ENCODE measurements at regions of chr2 and their contacts with region 1.

Region 1: DNA sequence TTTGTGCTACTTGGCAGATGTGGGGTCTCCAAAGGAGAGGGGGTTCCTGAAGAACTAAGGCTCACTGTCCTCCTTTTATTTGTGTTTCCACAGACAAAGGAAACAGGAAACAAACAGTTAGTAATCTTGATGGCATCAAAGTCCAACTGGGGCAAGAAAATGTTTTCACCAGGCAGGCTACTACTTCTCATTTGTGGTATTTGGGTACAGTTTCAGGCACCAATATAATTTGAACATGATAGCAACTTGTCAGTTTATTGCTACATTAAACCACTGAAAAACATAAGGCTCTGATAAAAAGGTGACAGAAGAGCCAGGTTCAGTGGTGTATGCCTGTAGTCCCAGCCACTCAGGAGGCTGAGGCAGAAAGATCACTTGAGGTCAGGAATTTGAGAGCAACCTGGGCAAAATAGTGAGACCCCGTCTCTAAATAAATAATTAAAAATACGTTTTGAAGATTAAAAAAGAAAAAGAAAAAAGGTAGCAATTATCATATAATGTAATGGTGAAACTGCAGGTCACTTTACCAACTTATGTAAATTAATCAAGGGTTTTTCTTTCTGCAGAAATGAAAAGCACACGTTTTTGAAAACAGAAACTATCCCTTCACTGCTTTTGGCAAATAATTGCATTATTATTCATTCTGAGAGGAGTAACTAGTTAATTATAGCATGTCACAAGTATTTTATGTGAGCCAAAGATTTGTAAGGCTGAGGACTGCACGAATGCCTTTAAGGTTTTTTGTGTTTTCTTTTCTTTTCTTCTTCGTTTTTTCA is 157.5 kb upstream of the CAVIN2 start:
- DNase-seq: no peak
- H3K4me3 ChIP-seq: no peak overlapping the region
- H3K27ac ChIP-seq: no peak overlapping the region
- H3K4me1 ChIP-seq: no peaks in the 10 kb centered on the region
- H3K27me3 ChIP-seq: no peaks in the 10 kb centered on the region
- CTCF ChIP-seq: no peak

Region 2: DNA sequence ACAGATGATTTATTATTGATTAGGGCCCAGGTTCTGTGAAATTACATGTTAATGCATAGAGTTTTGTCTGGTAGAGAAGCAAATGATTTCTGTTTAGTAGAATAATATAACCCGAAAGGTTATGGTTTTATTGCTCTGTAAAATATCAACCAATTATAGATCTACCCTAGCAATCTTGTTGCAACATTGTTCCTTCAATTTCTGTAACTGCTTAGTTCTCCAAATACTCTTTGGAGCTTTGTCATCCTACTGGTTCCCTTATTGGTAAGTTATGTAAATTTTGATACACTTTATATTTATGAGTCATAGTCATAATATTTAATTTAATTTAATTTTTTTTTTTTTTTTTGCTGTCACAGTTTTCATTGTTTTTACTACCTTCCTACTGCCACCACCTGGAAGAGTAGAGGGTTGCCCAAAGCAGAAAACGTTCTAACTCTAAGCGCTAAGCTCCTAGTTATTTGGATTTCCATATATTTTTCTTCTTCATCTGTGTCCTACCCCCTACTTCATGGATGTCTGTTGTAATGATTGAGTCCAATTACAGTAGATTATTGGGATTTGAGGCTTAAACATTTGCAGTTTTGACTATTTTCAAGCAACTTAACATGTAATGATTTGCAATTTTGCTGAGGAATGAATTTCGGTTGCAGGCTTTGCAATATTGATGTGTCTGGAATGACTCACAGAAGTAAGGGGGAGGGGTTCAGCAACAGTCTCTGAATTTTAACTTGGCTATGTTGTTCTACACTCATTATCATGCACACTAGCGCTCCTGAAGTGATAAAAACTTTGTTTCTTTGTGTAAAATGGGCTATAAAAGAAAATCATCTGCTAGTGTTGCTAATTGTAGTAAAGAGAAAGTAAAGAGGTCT is 275.4 kb before region 1 on chr2:
- CTCF ChIA-PET with region 1: no interaction called
- POLR2A ChIA-PET with region 1: no interaction called
- intact Hi-C with region 1: no loop called
- DNase-seq: peak; percentile 48
- H3K4me3 ChIP-seq: no peak overlapping the region
- H3K27ac ChIP-seq: no peak overlapping the region
- H3K4me1 ChIP-seq: peaks cover 22% of the 10 kb centered on the region
- H3K27me3 ChIP-seq: no peaks in the 10 kb centered on the region
- CTCF ChIP-seq: peak; percentile 43; the same call in 1 of the 2 replicates

Region 3: DNA sequence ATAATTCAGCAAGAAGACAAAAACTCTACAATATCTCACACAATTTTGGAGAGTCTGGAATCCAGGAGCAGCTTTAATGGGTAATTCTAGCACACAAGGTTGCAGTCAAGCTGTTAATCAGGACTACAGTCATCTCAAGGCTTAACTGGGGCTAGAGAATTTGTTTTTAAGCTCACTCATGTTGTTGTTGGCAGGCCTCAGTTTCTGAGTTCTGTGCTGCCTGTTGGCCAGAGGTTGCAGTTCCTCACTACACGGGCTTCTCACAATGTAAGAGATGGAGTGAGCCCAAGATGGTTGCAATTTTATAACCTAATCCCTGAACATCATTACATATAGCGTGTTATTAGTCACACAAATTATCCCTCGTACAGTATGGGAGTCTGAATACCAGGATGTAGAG is 241.0 kb after region 1 on chr2:
- CTCF ChIA-PET with region 1: no interaction called
- POLR2A ChIA-PET with region 1: interaction called, 10 read pairs
- intact Hi-C with region 1: no loop called
- DNase-seq: no peak
- H3K4me3 ChIP-seq: no peak overlapping the region
- H3K27ac ChIP-seq: no peak overlapping the region
- H3K4me1 ChIP-seq: no peaks in the 10 kb centered on the region
- H3K27me3 ChIP-seq: no peaks in the 10 kb centered on the region
- CTCF ChIP-seq: no peak

Region 4: DNA sequence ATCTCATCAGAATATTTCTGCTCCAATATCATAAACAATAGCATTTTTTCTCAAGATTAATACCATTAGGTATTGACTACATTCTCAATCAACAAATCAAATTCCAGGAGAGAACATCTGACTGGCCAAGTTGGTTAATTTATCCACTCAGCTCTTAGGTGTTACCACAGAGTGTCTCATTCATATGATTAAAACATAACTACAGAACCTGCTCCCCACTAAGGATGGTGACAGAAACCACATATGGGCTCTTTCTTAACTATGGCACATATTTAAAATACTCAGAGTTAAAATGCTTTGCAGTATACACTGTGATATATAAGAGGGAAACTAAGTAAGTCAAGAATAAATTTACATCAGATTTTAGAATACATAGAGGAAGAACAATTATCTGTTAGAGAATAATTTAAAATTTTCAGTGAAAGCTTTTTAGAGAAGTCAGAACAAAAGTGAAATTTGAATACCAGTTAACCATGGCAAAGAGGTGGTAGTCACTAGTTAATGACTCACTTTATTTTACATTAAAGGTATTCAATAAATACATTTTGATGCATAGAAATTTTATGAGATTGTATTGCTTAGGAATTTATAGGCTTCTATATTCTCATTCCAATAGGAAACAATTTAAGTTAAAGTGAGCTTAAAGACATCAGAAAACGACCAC is 1311.2 kb after region 1 on chr2:
- CTCF ChIA-PET with region 1: no interaction called
- POLR2A ChIA-PET with region 1: no interaction called
- intact Hi-C with region 1: no loop called
- DNase-seq: no peak
- H3K4me3 ChIP-seq: no peak overlapping the region
- H3K27ac ChIP-seq: no peak overlapping the region
- H3K4me1 ChIP-seq: no peaks in the 10 kb centered on the region
- H3K27me3 ChIP-seq: no peaks in the 10 kb centered on the region
- CTCF ChIP-seq: no peak

Measured in A673 (cell line).